Activated CD8-positive, alpha-beta T cell treated with anti-CD3 and anti-CD28 coated beads for 36 hours (primary cell): ENCODE measurements at regions of chr14 and their contacts with region 1.

Region 1: GRCh38 chr14:49862089-49862673 is 9.6 kb upstream of the NEMF start:
- DNase-seq: peak; percentile 92
- ATAC-seq: peak; percentile 21
- H3K4me3 Mint-ChIP-seq: no peak overlapping the region
- H3K27ac Mint-ChIP-seq: no peak overlapping the region
- H3K4me1 Mint-ChIP-seq: peaks cover 20% of the 10 kb centered on the region
- H3K27me3 Mint-ChIP-seq: peaks cover 2% of the 10 kb centered on the region
- CTCF ChIP-seq: peak; percentile 100

Region 2: GRCh38 chr14:49633640-49634546 is 228.3 kb before region 1 on chr14:
- CTCF ChIA-PET with region 1: interaction called, 17 read pairs
- POLR2A ChIA-PET with region 1: interaction called, 6 read pairs
- intact Hi-C with region 1: loop called (anchors 5 kb)
- DNase-seq: peak; percentile 97
- ATAC-seq: peak; percentile 90
- H3K4me3 Mint-ChIP-seq: peak overlapping the region; percentile 92
- H3K27ac Mint-ChIP-seq: peak overlapping the region; percentile 96
- H3K4me1 Mint-ChIP-seq: peaks cover 36% of the 10 kb centered on the region
- H3K27me3 Mint-ChIP-seq: no peaks in the 10 kb centered on the region
- CTCF ChIP-seq: peak; percentile 81

Region 3: GRCh38 chr14:49892636-49893308 is 30.6 kb after region 1 on chr14 and contains the start of gene ARF6:
- CTCF ChIA-PET with region 1: interaction called, 14 read pairs
- POLR2A ChIA-PET with region 1: interaction called, 56 read pairs
- intact Hi-C with region 1: loop called (anchors 2 kb)
- DNase-seq: peak; percentile 98
- ATAC-seq: peak; percentile 80
- H3K4me3 Mint-ChIP-seq: peak within 1 kb of the TSS; percentile 88
- H3K27ac Mint-ChIP-seq: peak within 1 kb of the TSS; percentile 97
- H3K4me1 Mint-ChIP-seq: peaks cover 4% of the 10 kb centered on the region
- H3K27me3 Mint-ChIP-seq: no peaks in the 10 kb centered on the region
- CTCF ChIP-seq: no peak
- total RNA-seq, gene ARF6: 170 TPM

Region 4: GRCh38 chr14:50038398-50039119 is 176.4 kb after region 1 on chr14:
- CTCF ChIA-PET with region 1: interaction called, 17 read pairs
- POLR2A ChIA-PET with region 1: interaction called, 17 read pairs
- intact Hi-C with region 1: no loop called
- DNase-seq: peak; percentile 90
- ATAC-seq: peak; percentile 84
- H3K4me3 Mint-ChIP-seq: peak overlapping the region; percentile 69
- H3K27ac Mint-ChIP-seq: peak overlapping the region; percentile 97
- H3K4me1 Mint-ChIP-seq: peaks cover 61% of the 10 kb centered on the region
- H3K27me3 Mint-ChIP-seq: no peaks in the 10 kb centered on the region
- CTCF ChIP-seq: no peak

Region 5: GRCh38 chr14:50085570-50086320 is 223.6 kb after region 1 on chr14:
- CTCF ChIA-PET with region 1: interaction called, 47 read pairs
- POLR2A ChIA-PET with region 1: interaction called, 45 read pairs
- intact Hi-C with region 1: no loop called
- DNase-seq: peak; percentile 62
- ATAC-seq: peak; percentile 24
- H3K4me3 Mint-ChIP-seq: peak overlapping the region; percentile 56
- H3K27ac Mint-ChIP-seq: peak overlapping the region; percentile 98
- H3K4me1 Mint-ChIP-seq: peaks cover 94% of the 10 kb centered on the region
- H3K27me3 Mint-ChIP-seq: no peaks in the 10 kb centered on the region
- CTCF ChIP-seq: no peak

Region 6: DNA sequence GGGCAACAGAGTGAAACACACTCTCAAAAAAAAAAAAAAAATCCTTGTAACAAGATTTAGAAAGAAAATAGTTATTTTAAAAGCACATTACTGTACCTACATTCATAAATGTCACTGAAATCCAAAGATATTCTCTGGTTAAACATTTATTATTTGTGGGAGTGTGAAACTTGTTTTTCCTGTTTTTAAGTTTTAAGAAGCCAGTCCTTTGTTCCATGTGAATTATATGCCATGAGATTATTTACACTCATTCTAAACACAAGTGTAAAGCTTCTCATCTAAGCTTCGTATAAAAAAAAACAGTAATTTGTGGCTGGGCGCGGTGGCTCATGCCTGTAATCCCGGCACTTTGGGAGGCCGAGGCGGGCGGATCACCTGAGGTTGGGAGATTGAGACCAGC is 239.2 kb after region 1 on chr14:
- CTCF ChIA-PET with region 1: interaction called, 218 read pairs
- POLR2A ChIA-PET with region 1: interaction called, 23 read pairs
- intact Hi-C with region 1: loop called (anchors 2 kb)
- DNase-seq: no peak
- ATAC-seq: no peak
- H3K4me3 Mint-ChIP-seq: no peak overlapping the region
- H3K27ac Mint-ChIP-seq: no peak overlapping the region
- H3K4me1 Mint-ChIP-seq: peaks cover 66% of the 10 kb centered on the region
- H3K27me3 Mint-ChIP-seq: no peaks in the 10 kb centered on the region
- CTCF ChIP-seq: no peak

Region 7: DNA sequence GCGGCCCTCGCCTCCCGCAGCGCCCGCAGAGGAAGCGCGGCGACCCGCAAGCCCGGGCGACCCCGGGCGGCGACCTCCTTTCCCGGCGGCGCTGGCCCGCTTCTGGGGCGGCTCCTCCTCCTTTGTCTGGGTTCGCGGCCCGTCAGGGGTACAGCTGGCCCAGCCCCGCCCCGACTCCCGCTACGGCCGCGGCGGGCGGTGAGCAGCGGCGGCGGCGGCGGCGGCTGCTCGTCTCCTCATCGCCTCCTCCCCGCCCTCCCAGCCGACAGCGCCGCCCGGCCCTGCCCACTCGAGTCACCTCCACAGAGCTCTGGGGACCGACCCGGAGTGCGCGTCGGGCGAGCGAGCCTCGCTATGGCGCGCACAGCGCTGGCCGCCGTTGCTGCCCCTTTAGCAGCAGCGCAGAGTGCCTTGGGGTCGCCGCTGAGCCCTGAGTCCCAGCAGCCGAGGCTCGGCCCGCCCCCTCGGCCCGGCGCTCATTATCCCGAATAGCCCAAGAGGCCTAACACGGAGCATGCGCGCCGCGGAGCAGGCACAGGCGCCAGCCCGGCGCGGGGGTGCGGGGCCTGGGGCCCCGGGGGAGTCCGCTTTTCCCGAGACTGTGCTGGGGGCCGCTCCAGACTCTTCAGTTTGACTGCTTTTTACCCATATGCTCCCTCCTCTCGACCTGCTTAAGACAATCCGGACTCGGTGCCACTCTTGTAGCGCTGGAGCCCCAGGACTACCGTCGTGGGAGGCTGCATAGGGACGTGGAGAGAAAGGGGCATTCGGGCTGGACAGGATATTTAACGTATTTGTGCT is 369.5 kb after region 1 on chr14 and contains the start of gene SOS2:
- CTCF ChIA-PET with region 1: interaction called, 3 read pairs
- POLR2A ChIA-PET with region 1: no interaction called
- intact Hi-C with region 1: loop called (anchors 5 kb)
- DNase-seq: peak; percentile 81
- ATAC-seq: peak; percentile 77
- H3K4me3 Mint-ChIP-seq: peak within 1 kb of the TSS; percentile 84
- H3K27ac Mint-ChIP-seq: peak within 1 kb of the TSS; percentile 91
- H3K4me1 Mint-ChIP-seq: peaks cover 33% of the 10 kb centered on the region
- H3K27me3 Mint-ChIP-seq: no peaks in the 10 kb centered on the region
- CTCF ChIP-seq: no peak
- total RNA-seq, gene SOS2: 14.7 to 16.4 TPM